IMR-90 (cell line): ENCODE measurements at regions of chr10 and their contacts with region 1.

Region 1: GRCh38 chr10:117216611-117217195 is 19.4 kb downstream of the KCNK18 start:
- DNase-seq: peak; percentile 57
- ATAC-seq: peak; percentile 96
- H3K4me3 ChIP-seq: peak overlapping the region; percentile 34
- H3K27ac ChIP-seq: no peak overlapping the region
- H3K4me1 ChIP-seq: no peaks in the 10 kb centered on the region
- H3K27me3 ChIP-seq: peaks cover 10% of the 10 kb centered on the region
- CTCF ChIP-seq: peak; percentile 100
- POLR2A ChIP-seq: no peak
- RAD21 ChIP-seq: peak; percentile 91

Region 2: DNA sequence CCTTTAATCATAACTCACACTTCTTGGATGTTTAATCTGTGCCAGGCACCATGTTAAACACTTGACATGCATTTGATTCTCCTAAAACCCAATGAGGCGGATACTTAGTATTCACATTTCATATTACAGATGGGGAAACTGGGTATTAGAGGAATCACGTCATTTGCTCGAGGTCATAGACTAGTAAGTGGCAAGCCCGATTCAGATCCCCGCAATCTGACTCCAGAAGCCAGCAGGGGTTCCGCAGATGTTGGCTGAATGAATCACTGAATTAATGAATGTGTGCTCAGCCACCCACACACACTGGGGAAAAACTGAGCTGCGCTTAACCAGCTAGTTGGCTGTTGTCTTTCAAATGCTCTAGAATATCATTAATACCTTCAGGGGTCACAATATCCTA is 389.9 kb before region 1 on chr10:
- CTCF ChIA-PET with region 1: no interaction called
- POLR2A ChIA-PET with region 1: no interaction called
- dilution Hi-C with region 1: no loop called
- in situ Hi-C with region 1: no loop called
- intact Hi-C with region 1: no loop called
- DNase-seq: peak; percentile 48
- ATAC-seq: no peak
- H3K4me3 ChIP-seq: no peak overlapping the region
- H3K27ac ChIP-seq: no peak overlapping the region
- H3K4me1 ChIP-seq: no peaks in the 10 kb centered on the region
- H3K27me3 ChIP-seq: peaks cover 4% of the 10 kb centered on the region; the same call in 1 of the 2 replicates
- CTCF ChIP-seq: no peak
- POLR2A ChIP-seq: no peak
- RAD21 ChIP-seq: no peak

Region 3: DNA sequence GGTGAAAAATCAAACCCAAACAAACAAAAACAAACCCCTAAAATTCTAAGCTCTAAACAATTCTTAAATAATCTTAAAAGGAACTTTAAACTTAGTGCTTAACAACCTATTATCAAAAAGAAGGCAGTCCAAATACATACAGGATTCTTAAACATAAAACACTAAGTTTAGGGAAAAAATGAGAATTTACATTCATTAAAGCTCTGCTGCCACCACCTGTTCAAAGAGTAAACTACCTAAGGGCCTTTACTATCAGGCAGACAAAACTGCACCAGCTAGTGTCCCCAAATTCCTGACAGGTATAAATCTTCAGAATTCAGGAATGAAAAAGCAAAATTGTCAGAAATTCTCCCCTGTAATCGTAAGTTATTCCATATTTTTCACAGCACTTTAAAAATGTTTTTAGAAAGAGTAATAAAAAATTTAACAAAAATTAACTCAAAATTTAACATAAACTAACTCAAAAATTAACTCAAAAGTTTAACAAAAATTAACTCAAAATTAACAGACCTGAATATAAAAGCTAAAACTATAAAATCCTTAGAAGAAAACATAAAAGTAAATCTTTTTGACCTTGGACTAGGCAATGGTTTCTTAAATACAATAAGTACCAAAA is 103.5 kb after region 1 on chr10:
- CTCF ChIA-PET with region 1: interaction called, 37 read pairs
- POLR2A ChIA-PET with region 1: no interaction called
- dilution Hi-C with region 1: no loop called
- in situ Hi-C with region 1: loop called (anchors 5 kb)
- intact Hi-C with region 1: loop called (anchors 1 kb)
- DNase-seq: peak; percentile 27
- ATAC-seq: peak; percentile 48; the same call in 1 of the 2 replicates
- H3K4me3 ChIP-seq: no peak overlapping the region
- H3K27ac ChIP-seq: no peak overlapping the region
- H3K4me1 ChIP-seq: 0 out of 2 replicates have a peak, but pooled peaks cover 2% of the 10 kb centered on the region
- H3K27me3 ChIP-seq: no peaks in the 10 kb centered on the region
- CTCF ChIP-seq: peak; percentile 61
- POLR2A ChIP-seq: no peak
- RAD21 ChIP-seq: peak; percentile 50

Region 4: DNA sequence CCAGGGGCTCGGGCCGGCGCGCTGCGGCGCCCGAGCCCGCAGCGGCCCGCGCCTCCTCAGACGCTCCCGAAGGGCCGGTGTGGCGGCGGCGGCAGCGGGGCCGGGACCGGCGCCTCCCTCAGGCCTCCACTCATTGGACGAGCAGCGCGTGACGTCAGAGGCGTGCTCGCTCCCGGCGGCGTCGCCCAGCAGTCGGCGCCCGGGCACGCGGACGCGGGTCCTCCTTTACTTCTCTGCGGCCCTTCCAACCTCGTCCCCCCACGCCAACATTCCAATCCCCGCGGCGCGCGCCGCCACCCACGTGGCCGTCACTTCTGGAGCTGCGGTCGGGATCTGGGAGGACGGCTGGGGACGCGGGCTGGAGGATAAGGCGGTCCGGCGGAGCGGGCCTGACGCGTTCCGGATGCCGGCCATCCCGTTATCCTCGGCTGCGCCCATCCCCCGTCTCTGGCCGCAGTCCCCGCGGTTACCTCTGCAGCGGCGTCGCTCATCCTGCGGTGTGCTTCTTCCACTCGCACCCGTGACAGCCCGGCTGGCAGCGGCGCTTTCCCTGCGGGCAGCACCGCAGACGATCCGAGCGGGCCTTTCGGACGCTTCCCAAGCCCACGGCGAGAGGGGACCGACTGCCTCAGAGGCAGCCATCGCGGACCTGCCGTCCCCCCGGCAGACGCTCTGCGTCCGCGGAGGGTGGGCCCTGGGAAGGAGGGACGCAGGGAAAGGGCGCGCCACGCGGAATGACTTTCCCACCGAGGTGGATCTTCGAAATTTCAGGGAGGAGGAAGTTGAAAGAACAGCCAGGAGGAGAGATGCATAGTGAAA is 158.9 kb after region 1 on chr10 and contains the start of gene PDZD8:
- CTCF ChIA-PET with region 1: no interaction called
- POLR2A ChIA-PET with region 1: no interaction called
- dilution Hi-C with region 1: no loop called
- in situ Hi-C with region 1: no loop called
- intact Hi-C with region 1: loop called (anchors 2 kb)
- DNase-seq: peak; percentile 90
- ATAC-seq: peak; percentile 90
- H3K4me3 ChIP-seq: peak within 1 kb of the TSS; percentile 96
- H3K27ac ChIP-seq: peak within 1 kb of the TSS; percentile 89
- H3K4me1 ChIP-seq: no peaks in the 10 kb centered on the region; the same call in 1 of the 2 replicates
- H3K27me3 ChIP-seq: peaks cover 14% of the 10 kb centered on the region
- CTCF ChIP-seq: 0 out of 2 replicates have a peak, but pooled peaks have one; percentile 0
- POLR2A ChIP-seq: peak; percentile 90
- RAD21 ChIP-seq: no peak
- total RNA-seq, gene PDZD8: 20.4 and 22.5 TPM in 2 replicates

Region 5: DNA sequence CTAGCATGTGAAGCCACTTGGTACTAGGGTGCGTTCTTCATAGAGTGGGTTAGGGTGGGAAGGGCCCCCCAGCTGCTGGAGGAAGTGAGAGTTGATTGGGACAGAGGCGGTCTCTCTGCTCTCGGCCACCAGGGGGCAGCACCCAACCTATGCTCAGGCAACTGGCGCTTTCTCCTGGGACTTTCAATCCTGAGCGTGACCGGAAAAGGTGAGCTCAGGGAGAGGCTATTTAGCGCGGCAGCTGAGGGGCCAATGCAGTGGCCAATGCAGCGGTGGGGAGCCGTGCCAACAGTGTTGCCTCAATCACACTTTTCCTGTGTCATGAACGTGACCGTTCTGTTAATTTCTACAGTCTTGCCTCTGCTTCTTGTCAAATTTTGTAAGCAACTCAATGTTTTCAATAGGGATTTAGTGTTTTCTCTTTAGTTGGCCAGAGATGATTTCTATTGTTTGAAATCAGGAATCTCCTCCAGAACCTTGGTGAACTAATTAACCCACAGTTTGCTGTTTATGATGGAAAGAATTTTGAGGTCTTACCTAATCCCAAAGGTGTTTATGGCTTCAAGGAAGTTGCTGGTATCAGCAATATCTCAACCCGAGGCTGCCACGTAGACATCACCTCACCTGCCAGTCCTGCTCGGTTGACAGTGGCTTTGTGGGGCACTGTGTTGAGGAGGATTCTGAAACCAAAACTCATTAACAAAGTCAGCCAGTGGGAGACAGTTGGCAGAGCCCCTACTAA is 226.4 kb after region 1 on chr10:
- CTCF ChIA-PET with region 1: interaction called, 4 read pairs
- POLR2A ChIA-PET with region 1: no interaction called
- dilution Hi-C with region 1: no loop called
- in situ Hi-C with region 1: no loop called
- intact Hi-C with region 1: loop called (anchors 10 kb)
- DNase-seq: peak; percentile 32
- ATAC-seq: peak; percentile 53; the same call in 1 of the 2 replicates
- H3K4me3 ChIP-seq: no peak overlapping the region
- H3K27ac ChIP-seq: no peak overlapping the region
- H3K4me1 ChIP-seq: no peaks in the 10 kb centered on the region
- H3K27me3 ChIP-seq: no peaks in the 10 kb centered on the region
- CTCF ChIP-seq: peak; percentile 52
- POLR2A ChIP-seq: no peak
- RAD21 ChIP-seq: peak; percentile 43

Region 6: GRCh38 chr10:117477961-117478670 is 261.4 kb after region 1 on chr10:
- CTCF ChIA-PET with region 1: no interaction called
- POLR2A ChIA-PET with region 1: no interaction called
- dilution Hi-C with region 1: no loop called
- in situ Hi-C with region 1: no loop called
- intact Hi-C with region 1: loop called (anchors 10 kb)
- DNase-seq: peak; percentile 19
- ATAC-seq: no peak
- H3K4me3 ChIP-seq: no peak overlapping the region
- H3K27ac ChIP-seq: no peak overlapping the region
- H3K4me1 ChIP-seq: no peaks in the 10 kb centered on the region
- H3K27me3 ChIP-seq: no peaks in the 10 kb centered on the region
- CTCF ChIP-seq: no peak
- POLR2A ChIP-seq: no peak
- RAD21 ChIP-seq: no peak